Activated CD4-positive, alpha-beta memory T cell treated with anti-CD3 and anti-CD28 coated beads, Interleukin-2, amount 10 ng/mL, durations not matched to agents 7 days and 5 days (primary cell): ENCODE measurements at regions of chr9 and their contacts with region 1.

Region 1: DNA sequence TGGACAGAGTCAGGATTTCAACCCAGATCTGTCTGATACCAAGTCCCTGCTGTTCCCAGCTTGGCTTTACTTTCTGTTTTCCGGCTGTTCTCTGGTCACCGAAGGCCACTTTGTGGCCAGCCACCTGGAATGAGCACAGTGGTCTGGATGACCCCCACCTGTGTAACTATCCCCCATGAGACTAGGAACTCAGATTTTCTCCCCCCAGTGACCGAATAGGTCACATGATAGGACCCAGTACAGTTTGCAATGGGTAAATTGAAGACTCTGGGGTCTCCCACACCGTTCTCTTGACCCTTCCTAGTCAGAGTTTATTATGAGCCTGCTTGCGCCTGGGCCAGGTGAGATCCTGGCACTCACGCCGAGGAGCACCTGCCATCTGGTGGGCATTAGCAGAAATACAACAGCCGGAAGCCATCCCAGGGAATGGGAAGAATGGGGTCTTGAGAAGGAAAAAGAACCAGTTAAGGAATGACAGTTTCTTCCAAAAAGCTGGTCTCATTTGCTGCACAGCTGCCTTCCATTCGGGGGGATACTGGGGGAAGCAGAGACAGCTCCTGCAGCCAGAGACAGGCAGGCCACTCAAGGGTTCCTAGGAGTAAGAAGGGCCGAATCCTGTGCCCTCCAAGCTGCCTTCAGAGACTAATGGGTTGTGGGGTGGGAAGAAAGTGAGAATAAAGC is 7.1 kb downstream of the PHYHD1 start:
- DNase-seq: peak; percentile 61
- H3K4me3 Mint-ChIP-seq: no peak overlapping the region
- H3K27ac Mint-ChIP-seq: no peak overlapping the region
- H3K4me1 Mint-ChIP-seq: peaks cover 18% of the 10 kb centered on the region
- H3K27me3 Mint-ChIP-seq: peaks cover 5% of the 10 kb centered on the region

Region 2: DNA sequence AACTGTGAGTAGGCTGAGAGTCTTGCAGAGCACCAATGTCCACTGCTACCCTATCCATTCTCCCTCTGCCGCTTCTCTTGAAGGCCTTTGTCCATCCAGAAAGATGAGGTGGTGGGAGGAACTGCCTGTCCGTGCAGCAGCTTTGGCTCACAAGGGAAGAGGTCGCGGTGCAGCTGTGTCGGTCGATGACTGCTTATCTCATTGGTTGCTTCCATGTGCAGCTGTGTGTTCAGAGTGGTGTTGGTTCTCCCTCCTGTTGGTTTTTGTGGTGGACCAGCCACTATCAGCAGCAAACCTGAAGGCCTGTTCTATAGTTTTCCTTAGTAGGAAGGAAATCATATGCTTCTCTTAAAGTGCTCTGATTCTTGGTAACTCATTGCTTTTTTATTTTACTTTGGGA is 334.8 kb before region 1 on chr9:
- CTCF ChIA-PET with region 1: no interaction called
- POLR2A ChIA-PET with region 1: no interaction called
- DNase-seq: no peak
- H3K4me3 Mint-ChIP-seq: no peak overlapping the region
- H3K27ac Mint-ChIP-seq: no peak overlapping the region
- H3K4me1 Mint-ChIP-seq: peaks cover 3% of the 10 kb centered on the region
- H3K27me3 Mint-ChIP-seq: no peaks in the 10 kb centered on the region

Region 3: DNA sequence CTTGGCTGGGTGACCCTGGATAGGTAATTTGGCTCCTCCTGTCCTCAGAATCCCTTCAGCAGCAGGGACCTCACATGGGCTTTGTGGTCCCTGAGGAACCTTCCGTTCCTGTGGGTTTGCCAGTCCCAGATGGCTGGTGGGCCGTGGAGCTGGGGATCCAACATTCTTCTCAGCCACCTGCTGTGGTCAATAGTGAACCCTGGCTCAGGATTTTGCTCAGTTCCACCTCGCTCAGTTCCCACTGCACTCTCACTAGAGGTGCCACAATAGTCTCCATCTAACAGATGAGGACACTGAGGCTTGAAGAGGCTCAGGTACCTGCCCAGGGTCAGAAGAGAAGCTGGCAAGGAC is 81.2 kb before region 1 on chr9:
- CTCF ChIA-PET with region 1: interaction called, 16 read pairs
- POLR2A ChIA-PET with region 1: no interaction called
- DNase-seq: no peak
- H3K4me3 Mint-ChIP-seq: no peak overlapping the region
- H3K27ac Mint-ChIP-seq: no peak overlapping the region
- H3K4me1 Mint-ChIP-seq: no peaks in the 10 kb centered on the region
- H3K27me3 Mint-ChIP-seq: no peaks in the 10 kb centered on the region

Region 4: GRCh38 chr9:128863647-128864046 is 64.2 kb before region 1 on chr9:
- CTCF ChIA-PET with region 1: interaction called, 123 read pairs
- POLR2A ChIA-PET with region 1: no interaction called
- DNase-seq: peak; percentile 88
- H3K4me3 Mint-ChIP-seq: no peak overlapping the region
- H3K27ac Mint-ChIP-seq: no peak overlapping the region
- H3K4me1 Mint-ChIP-seq: peaks cover 13% of the 10 kb centered on the region
- H3K27me3 Mint-ChIP-seq: no peaks in the 10 kb centered on the region

Region 5: GRCh38 chr9:128875790-128876160 is 52.1 kb before region 1 on chr9:
- CTCF ChIA-PET with region 1: interaction called, 26 read pairs
- POLR2A ChIA-PET with region 1: no interaction called
- DNase-seq: no peak
- H3K4me3 Mint-ChIP-seq: no peak overlapping the region
- H3K27ac Mint-ChIP-seq: no peak overlapping the region
- H3K4me1 Mint-ChIP-seq: peaks cover 28% of the 10 kb centered on the region
- H3K27me3 Mint-ChIP-seq: no peaks in the 10 kb centered on the region

Region 6: GRCh38 chr9:129237195-129237611 is 309.3 kb after region 1 on chr9:
- CTCF ChIA-PET with region 1: no interaction called
- POLR2A ChIA-PET with region 1: no interaction called
- DNase-seq: peak; percentile 43
- H3K4me3 Mint-ChIP-seq: peak overlapping the region; percentile 60
- H3K27ac Mint-ChIP-seq: peak overlapping the region; percentile 70
- H3K4me1 Mint-ChIP-seq: peaks cover 51% of the 10 kb centered on the region
- H3K27me3 Mint-ChIP-seq: no peaks in the 10 kb centered on the region